Gastrocnemius medialis (tissue), 4 donors: ENCODE measurements at regions of chr5 and their contacts with region 1.

Region 1: GRCh38 chr5:56175488-56175887 is 57.6 kb downstream of the ANKRD55 start:
- DNase-seq: peak in 1 of 2 donors; percentile 41
- ATAC-seq: peak; percentile 61 to 85
- H3K4me3 ChIP-seq: no peak overlapping the region
- H3K27ac ChIP-seq: peak overlapping the region; percentile 26 to 56 (median 35)
- H3K4me1 ChIP-seq: peaks cover 0 to 14% of the 10 kb centered on the region in 2 donors
- H3K27me3 ChIP-seq: no peaks in the 10 kb centered on the region
- CTCF ChIP-seq: no peak
- POLR2A ChIP-seq: no peak

Region 2: DNA sequence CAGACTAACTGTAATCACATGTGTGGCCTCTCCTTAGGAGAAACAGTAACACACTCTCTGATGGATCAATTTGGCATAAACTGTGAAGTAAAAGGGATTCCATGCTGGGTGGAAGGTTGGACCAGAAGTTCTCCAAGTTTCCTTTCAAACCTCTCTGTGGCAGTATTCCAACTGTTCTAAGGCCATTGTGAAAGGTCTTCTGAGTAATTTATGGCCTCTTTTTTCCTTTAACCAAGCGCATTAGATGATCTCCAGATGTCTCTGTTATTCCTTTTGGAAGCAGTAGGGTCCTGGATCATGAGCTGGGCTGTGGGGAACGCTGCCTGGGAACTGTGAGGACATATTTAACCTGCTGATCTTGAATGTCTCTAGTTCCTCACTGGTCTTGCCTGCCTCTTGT is 100.1 kb before region 1 on chr5:
- in situ Hi-C with region 1: no loop called
- intact Hi-C with region 1: loop called (anchors 5 kb)
- DNase-seq: peak; percentile 30 to 69
- ATAC-seq: peak; percentile 52 to 72
- H3K4me3 ChIP-seq: no peak overlapping the region
- H3K27ac ChIP-seq: peak overlapping the region; percentile 43 to 72 (median 62)
- H3K4me1 ChIP-seq: peaks cover 0 to 10% of the 10 kb centered on the region in 2 donors
- H3K27me3 ChIP-seq: no peaks in the 10 kb centered on the region
- CTCF ChIP-seq: no peak
- POLR2A ChIP-seq: no peak

Region 3: GRCh38 chr5:57566914-57567313 is 1391.4 kb after region 1 on chr5:
- in situ Hi-C with region 1: no loop called
- intact Hi-C with region 1: no loop called
- DNase-seq: no peak
- ATAC-seq: no peak
- H3K4me3 ChIP-seq: no peak overlapping the region
- H3K27ac ChIP-seq: no peak overlapping the region
- H3K4me1 ChIP-seq: no peaks in the 10 kb centered on the region
- H3K27me3 ChIP-seq: no peaks in the 10 kb centered on the region
- CTCF ChIP-seq: no peak
- POLR2A ChIP-seq: no peak